PC-9 (cell line): ENCODE measurements at regions of chr14 and their contacts with region 1.

Region 1: DNA sequence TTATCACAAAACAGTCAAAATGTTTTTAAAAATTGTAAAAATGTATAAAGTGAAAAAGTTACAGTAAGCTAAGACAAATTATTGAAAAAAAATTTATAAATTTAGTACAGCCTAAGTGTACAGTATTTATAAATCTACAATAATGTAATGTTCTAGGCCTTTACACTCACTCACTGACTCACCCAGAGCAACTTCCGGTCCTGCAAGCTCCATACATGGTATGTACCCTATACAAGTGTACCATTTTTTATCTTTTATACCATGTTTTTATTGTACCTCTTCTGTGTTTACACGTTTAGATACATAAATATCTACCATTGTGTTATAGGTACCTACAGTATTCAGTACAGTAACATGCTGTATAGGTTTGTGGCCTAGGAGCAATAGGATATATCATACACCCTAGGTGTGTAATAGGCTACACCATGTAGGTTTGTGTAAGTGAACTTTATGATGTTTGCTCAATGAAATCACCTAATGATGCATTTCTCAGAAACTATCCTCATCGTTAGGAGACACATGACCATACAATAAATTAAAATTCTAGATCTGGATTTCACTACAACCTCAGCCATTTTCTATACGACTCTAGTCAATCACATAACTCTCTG is 66.8 kb downstream of the TXNDC16 start:
- DNase-seq: no peak
- H3K4me3 ChIP-seq: no peak overlapping the region
- H3K27ac ChIP-seq: no peak overlapping the region
- H3K4me1 ChIP-seq: no peaks in the 10 kb centered on the region
- H3K27me3 ChIP-seq: no peaks in the 10 kb centered on the region
- CTCF ChIP-seq: no peak

Region 2: GRCh38 chr14:52241087-52241793 is 244.2 kb before region 1 on chr14:
- CTCF ChIA-PET with region 1: no interaction called
- POLR2A ChIA-PET with region 1: no interaction called
- intact Hi-C with region 1: no loop called
- DNase-seq: no peak
- H3K4me3 ChIP-seq: no peak overlapping the region
- H3K27ac ChIP-seq: no peak overlapping the region
- H3K4me1 ChIP-seq: no peaks in the 10 kb centered on the region
- H3K27me3 ChIP-seq: peaks cover 3% of the 10 kb centered on the region; the same call in 1 of the 2 replicates
- CTCF ChIP-seq: no peak

Region 3: GRCh38 chr14:52538623-52539022 is 53.2 kb after region 1 on chr14:
- CTCF ChIA-PET with region 1: no interaction called
- POLR2A ChIA-PET with region 1: interaction called, 10 read pairs
- intact Hi-C with region 1: no loop called
- DNase-seq: no peak
- H3K4me3 ChIP-seq: no peak overlapping the region
- H3K27ac ChIP-seq: no peak overlapping the region
- H3K4me1 ChIP-seq: no peaks in the 10 kb centered on the region
- H3K27me3 ChIP-seq: no peaks in the 10 kb centered on the region
- CTCF ChIP-seq: no peak